ENCODE measurements at regions of chr5 and their contacts with region 1.

Region 1: DNA sequence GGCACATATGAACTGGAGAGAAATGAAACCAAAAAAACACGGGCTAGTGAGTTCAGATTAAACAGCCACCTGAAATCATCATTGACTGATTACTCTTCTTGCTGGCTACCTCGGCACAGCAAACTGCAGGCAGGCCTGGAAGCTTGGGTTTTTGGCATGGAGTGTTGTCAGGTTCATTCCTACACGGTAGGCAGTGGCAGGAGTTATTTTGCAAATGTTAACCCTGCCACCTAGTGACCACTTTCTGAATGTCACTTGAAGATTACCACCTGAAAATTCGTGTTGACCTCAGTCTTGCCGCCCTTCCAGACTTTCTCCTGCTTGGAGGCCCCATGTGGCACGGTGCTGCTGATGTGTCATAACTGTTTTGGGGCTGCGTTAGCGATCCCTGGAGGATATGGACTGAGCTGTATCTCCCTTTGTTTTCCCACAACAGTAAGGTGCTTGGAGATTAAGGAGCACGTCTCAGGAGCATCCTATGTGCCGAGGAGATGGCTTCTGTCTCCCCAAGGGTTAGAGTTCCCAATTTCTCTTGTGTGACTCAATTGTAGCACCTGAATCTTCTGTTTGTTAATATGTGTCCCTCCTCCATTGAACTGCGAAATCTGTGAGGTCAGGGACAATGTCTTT is 12.7 kb upstream of the CD180 start:
- DNase-seq: peak in 2 of 3 donors; percentile 53 to 92
- ATAC-seq: peak; percentile 84
- H3K4me3 ChIP-seq: no peak overlapping the region
- H3K4me1 ChIP-seq: no peaks in the 10 kb centered on the region
- CTCF ChIP-seq: peak; percentile 60

Region 2: DNA sequence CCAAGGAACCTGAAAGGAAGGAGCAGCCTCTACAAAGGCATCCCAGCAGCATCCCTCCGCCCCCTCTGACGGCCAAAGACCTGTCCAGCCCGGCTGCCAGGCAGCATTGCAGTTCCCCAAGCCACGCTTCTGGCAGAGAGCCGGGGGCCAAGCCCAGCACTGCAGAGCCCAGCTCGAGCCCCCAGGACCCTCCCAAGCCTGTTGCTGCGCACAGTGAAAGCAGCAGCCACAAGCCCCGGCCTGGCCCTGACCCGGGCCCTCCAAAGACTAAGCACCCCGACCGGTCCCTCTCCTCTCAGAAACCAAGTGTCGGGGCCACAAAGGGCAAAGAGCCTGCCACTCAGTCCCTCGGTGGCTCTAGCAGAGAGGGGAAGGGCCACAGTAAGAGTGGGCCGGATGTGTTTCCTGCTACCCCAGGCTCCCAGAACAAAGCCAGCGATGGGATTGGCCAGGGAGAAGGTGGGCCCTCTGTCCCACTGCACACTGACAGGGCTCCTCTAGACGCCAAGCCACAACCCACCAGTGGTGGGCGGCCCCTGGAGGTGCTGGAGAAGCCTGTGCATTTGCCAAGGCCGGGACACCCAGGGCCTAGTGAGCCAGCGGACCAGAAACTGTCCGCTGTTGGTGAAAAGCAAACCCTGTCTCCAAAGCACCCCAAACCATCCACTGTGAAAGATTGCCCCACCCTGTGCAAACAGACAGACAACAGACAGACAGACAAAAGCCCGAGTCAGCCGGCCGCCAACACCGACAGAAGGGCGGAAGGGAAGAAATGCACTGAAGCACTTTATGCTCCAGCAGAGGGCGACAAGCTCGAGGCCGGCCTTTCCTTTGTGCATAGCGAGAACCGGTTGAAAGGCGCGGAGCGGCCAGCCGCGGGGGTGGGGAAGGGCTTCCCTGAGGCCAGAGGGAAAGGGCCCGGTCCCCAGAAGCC is 43.5 kb before region 1 on chr5:
- intact Hi-C with region 1: loop called in 1 of 2 experiments (anchors 5 kb)
- DNase-seq: peak; percentile 89 to 93 (median 92)
- ATAC-seq: peak; percentile 96
- H3K4me3 ChIP-seq: no peak overlapping the region
- H3K4me1 ChIP-seq: no peaks in the 10 kb centered on the region
- CTCF ChIP-seq: peak; percentile 75

Measured in mucosa of descending colon (tissue), 3 donors.